Panc1 (cell line): ENCODE measurements at regions of chr2 and their contacts with region 1.

Region 1: GRCh38 chr2:62163106-62163831 is 32.6 kb upstream of the B3GNT2 start:
- DNase-seq: no peak
- ATAC-seq: no peak
- H3K4me3 ChIP-seq: no peak overlapping the region
- H3K27ac ChIP-seq: no peak overlapping the region
- H3K4me1 ChIP-seq: no peaks in the 10 kb centered on the region
- H3K27me3 ChIP-seq: no peaks in the 10 kb centered on the region
- CTCF ChIP-seq: no peak

Region 2: DNA sequence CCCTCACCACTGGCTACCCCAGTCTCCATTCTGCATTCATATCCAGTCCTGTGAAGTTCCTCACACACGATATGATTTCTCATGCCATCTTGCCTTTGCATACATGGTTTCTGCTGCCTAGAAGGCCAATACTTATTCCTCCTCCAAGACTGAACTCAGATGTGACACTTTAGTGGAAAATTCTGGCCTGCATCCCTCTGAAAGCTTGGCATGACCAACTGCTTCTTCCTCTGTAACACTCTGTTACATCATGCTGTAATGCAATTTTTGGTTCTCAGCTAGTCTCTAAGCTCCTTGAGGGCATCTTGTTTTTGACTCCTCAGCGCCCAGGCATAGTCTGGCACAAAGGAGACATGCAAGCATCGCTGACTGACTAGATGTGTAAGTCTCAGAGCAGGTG is 322.0 kb before region 1 on chr2:
- CTCF ChIA-PET with region 1: no interaction called
- POLR2A ChIA-PET with region 1: interaction called, 10 read pairs
- in situ Hi-C with region 1: no loop called
- intact Hi-C with region 1: no loop called
- DNase-seq: no peak
- ATAC-seq: no peak
- H3K4me3 ChIP-seq: no peak overlapping the region
- H3K27ac ChIP-seq: no peak overlapping the region
- H3K4me1 ChIP-seq: no peaks in the 10 kb centered on the region
- H3K27me3 ChIP-seq: no peaks in the 10 kb centered on the region
- CTCF ChIP-seq: no peak

Region 3: GRCh38 chr2:61882850-61883249 is 280.4 kb before region 1 on chr2:
- CTCF ChIA-PET with region 1: no interaction called
- POLR2A ChIA-PET with region 1: interaction called, 20 read pairs
- in situ Hi-C with region 1: no loop called
- intact Hi-C with region 1: no loop called
- DNase-seq: no peak
- ATAC-seq: no peak
- H3K4me3 ChIP-seq: no peak overlapping the region
- H3K27ac ChIP-seq: no peak overlapping the region
- H3K4me1 ChIP-seq: peaks cover 8% of the 10 kb centered on the region
- H3K27me3 ChIP-seq: no peaks in the 10 kb centered on the region
- CTCF ChIP-seq: no peak